HCT116 (cell line): ENCODE measurements at regions of chr1 and their contacts with region 1.

Region 1: GRCh38 chr1:204072931-204073836 is at the start of gene SOX13:
- DNase-seq: peak; percentile 79
- ATAC-seq: peak; percentile 86
- H3K4me3 ChIP-seq: peak within 1 kb of the TSS; percentile 74 to 77
- H3K27ac ChIP-seq: peak within 1 kb of the TSS; percentile 91
- H3K4me1 ChIP-seq: peaks cover 11 to 32% of the 10 kb centered on the region in 2 experiments
- H3K27me3 ChIP-seq: no peaks in the 10 kb centered on the region
- CTCF ChIP-seq: peak in 2 of 3 experiments; percentile 16 to 18; a peak in 1 of 6 replicates
- POLR2A ChIP-seq: peak; percentile 95
- RAD21 ChIP-seq: no peak
- total RNA-seq, gene SOX13: 35.6 TPM

Region 2: DNA sequence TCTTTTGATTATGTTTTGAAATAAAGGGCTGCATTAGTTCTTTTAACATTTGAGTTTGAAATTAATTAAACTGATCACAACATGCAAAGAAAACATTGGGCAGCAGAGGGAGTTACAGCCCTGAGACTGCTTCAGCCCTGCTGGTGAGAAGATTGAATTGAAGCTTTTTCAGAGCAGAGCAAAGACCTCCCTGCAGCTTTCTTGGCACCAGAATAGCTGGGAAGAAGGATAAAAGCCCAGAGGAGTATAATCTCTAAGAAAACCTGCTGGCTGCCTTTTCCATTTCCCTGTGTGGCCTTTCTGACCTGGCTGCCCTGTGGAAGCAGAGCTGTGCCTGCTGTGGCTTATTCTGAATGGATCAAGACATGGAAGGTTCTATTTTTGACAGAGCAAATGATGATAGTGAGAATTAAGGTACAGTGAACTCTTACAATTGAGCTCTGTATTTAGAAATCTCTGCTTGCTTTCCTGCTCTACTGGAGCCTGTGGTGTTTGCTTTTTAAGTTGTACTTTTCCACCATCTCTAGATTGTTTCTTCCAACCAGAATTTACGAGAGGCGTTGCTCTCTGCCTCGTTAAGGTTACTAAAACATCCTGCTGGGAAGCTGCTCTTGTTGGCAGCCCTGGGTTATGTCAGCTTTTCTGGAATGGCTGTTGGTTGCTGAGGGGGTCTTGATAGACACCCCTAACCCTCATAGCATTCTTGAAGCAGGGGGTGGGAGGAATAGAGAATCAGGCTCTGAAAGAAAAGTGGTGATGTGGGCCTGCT is 201.9 kb before region 1 on chr1:
- CTCF ChIA-PET with region 1: interaction called, 13 read pairs
- POLR2A ChIA-PET with region 1: no interaction called
- RAD21 ChIA-PET with region 1: no interaction called
- intact Hi-C with region 1: loop called (anchors 5 kb)
- DNase-seq: peak; percentile 62
- ATAC-seq: peak; percentile 86
- H3K4me3 ChIP-seq: no peak overlapping the region
- H3K27ac ChIP-seq: no peak overlapping the region
- H3K4me1 ChIP-seq: no peaks in the 10 kb centered on the region
- H3K27me3 ChIP-seq: no peaks in the 10 kb centered on the region
- CTCF ChIP-seq: peak; percentile 84 to 98 (median 97)
- POLR2A ChIP-seq: no peak
- RAD21 ChIP-seq: peak; percentile 99